ENCODE measurements at regions of chr9 and their contacts with region 1.

Region 1: GRCh38 chr9:130940693-130941576 is 1.9 kb upstream of the FIBCD1 start:
- DNase-seq: peak; percentile 86

Region 2: DNA sequence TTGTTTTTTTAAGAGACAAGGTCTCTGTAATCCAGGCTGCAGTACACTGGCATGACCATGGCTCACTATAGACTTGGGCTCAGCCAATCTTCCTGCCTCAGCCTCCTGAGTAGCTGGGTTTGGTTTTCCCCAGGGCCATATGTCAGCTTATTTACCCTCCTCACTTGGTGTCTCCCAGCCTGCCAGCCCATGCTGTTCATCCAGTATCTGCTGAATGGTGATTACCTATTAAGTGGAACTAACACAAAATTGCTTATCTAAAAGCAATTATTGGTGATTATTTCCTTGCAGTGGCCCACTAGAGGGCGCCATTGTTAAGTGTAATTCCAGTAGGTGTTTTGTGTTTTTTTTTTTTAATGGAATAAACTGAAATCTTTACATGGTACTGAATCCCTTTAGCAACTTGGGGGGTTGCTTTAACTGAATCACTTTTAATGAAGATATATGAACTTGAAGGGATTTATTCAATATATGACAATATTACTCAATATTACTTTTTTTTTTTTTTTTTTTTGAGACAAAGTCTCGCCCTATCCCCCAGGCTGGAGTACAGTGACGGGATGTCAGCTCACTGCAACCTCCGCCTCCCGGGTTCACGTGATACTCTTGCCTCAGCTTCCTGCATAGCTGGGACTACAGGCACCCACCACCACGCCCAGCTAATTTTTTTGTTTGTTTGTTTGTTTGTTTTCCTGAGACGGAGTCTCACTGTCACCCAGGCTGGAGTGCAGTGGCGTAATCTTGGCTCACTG is 233.5 kb before region 1 on chr9:
- intact Hi-C with region 1: loop called in 1 of 2 experiments (anchors 5 kb)
- DNase-seq: no peak

Region 3: DNA sequence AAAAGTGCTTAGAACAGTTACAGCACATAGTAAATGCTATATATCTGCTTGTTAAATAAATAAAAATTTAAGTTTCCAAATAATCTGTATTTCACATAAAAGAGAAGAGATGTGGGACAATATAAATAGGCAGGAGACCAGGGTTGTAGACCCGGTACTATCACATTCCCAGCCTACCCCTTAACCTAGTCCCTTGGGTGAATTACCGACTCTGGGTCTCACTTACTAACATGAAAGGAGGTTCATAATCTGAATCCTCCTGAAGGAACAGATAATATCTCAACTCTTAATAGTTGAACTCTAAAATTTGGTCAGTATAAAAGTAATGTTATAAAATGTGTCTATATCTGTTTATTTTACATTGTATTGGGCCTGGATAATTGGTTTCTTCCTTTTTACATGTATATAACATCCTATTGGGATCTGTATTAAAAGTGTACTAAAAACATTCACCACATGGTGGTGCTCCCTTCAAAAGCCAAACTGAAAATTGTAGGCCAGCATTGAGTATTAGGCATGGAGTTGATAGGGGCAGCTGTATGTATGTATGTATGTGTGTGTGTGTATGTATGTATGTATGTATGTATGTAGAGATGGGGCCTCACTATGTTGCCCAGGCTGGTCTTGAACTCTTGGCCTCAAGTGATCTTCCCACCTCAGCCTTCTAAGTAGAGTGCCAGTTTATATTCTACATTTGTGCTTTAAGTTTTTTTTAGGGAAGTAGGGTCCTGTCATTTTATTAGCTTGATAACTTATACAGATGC is 170.1 kb before region 1 on chr9:
- intact Hi-C with region 1: loop called in 1 of 2 experiments (anchors 10 kb)
- DNase-seq: no peak

Region 4: DNA sequence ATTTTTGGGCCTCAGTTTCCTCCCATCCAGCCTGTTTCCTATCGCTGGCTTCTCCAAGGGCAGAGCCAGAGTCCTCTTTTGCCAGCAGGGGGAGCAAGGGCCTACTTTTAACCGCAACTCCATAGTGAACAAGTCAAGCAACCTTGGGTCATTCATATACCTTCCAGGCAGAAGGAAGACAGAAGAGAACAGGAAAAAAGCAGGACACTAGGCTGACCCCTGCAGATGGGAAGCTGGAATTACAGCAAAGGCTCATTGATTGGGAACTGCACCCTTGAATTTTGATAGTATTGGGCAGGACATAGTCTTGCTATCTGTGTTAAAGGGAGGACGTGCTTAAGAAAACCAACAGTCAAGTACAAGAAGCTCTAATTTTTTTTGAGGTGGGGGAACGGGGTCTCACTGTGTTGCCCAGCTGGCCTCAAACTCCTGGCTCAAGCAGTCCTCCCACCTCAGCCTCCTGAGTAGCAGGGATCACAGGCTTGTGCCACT is 74.4 kb before region 1 on chr9:
- intact Hi-C with region 1: loop called in 1 of 2 experiments (anchors 5 kb)
- DNase-seq: no peak

Region 5: DNA sequence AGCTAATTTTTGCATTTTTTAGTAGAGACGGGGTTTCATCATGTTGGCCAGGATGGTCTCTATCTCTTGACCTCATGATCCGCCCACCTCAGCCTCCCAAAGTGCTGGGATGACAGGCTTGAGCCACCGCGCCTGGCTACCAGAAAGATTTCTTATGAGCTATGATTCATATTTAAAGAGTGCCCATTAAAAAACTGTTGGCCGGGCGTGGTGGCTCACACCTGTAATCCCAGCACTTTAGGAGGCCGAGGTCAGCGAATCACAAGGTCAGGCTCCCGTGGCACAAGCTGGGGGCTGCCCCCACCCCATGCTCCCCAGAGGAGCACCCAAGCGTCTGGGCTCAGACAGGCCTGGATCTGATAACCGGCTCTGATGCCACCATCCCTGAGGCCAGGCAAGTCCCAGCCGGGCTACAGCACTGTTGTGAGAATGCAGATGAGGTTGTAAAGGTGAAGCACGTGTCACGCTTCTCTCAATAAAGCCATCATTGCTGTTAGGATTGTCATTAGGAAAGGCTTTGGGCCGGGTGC is 58.2 kb before region 1 on chr9:
- intact Hi-C with region 1: loop called in 1 of 2 experiments (anchors 1 kb)
- DNase-seq: no peak

Region 6: GRCh38 chr9:130901498-130902203 is 39.3 kb before region 1 on chr9:
- intact Hi-C with region 1: no loop called
- DNase-seq: no peak

Measured in posterior vena cava (tissue), 2 donors.